ENCODE measurements at regions of chr19 and their contacts with region 1.

Region 1: DNA sequence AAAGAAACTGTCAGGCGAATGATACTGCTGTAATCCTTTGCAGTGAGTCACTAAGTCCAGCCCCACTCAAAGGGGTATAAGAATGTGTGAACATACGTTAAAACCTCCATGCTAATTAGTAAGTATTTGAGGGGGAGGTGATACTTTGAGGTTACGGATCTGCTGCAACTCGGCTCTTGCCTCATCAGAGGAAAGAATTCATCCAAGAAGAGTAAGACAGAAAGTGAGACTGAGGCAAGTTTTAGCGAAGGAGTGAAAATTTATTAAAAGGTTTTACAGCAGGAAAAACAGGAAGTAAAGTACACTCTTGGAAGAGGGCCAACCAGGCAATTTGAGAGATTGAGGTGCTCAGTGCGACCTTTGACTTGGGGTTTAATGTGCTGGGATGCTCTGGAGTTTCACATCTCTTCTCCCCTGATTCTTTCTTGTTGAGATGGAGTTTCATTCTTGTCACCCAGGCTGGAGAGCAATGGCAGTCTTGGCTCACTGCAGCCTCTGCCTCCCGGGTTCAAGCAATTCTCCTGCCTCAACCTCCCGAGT is 9.8 kb downstream of the CLEC4M start:
- DNase-seq: peak; percentile 64
- ATAC-seq: peak; percentile 97
- H3K4me3 Mint-ChIP-seq: peak overlapping the region; percentile 13
- H3K27ac Mint-ChIP-seq: peak overlapping the region; percentile 85
- H3K4me1 Mint-ChIP-seq: peaks cover 27% of the 10 kb centered on the region
- H3K27me3 Mint-ChIP-seq: peaks cover 31% of the 10 kb centered on the region

Region 2: DNA sequence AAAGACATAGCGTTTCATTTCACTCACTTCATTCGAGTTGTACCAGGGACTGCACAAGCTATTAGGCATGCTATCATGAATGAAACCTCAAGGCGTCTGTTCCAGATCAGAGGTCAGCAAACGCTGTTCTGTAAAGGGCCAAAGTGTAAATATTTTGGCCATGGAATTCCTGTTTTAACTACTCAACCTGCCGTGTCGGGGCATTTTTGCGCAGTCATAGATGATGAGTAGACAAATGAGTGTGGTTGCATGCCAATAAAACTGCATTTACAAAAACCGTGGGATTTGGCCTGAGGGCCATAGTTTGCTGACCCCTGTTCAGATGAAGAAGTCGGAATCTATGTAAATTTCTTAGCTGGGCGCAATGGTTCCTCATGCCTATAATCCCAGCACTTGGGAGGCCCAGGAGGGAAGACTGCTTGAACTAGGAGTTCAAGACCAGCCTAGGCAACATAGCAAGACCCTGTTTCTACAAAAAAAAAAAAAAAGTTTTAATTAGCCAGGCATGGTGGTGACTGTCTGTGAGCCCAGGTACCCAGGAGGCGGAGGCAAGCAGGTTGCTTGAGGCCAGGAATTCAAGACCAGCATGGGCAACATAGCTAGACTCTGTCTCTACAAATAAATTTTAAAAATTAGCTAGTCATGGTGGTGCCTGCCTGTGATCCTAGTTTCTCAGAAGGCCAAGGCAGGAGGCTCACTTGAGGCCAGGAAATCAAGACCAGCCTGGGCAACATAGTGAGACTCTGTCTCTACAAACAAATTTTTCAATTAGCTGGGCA is 484.9 kb before region 1 on chr19:
- CTCF ChIA-PET with region 1: no interaction called
- POLR2A ChIA-PET with region 1: no interaction called
- intact Hi-C with region 1: no loop called
- DNase-seq: no peak
- ATAC-seq: no peak
- H3K4me3 Mint-ChIP-seq: no peak overlapping the region
- H3K27ac Mint-ChIP-seq: no peak overlapping the region
- H3K4me1 Mint-ChIP-seq: no peaks in the 10 kb centered on the region
- H3K27me3 Mint-ChIP-seq: peaks cover 8% of the 10 kb centered on the region

Region 3: GRCh38 chr19:7699417-7700401 is 73.1 kb before region 1 on chr19:
- CTCF ChIA-PET with region 1: interaction called, 3 read pairs
- POLR2A ChIA-PET with region 1: no interaction called
- intact Hi-C with region 1: loop called in 1 of 2 experiments (anchors 2 kb)
- DNase-seq: peak; percentile 80
- ATAC-seq: peak; percentile 78
- H3K4me3 Mint-ChIP-seq: peak overlapping the region; percentile 46
- H3K27ac Mint-ChIP-seq: peak overlapping the region; percentile 39
- H3K4me1 Mint-ChIP-seq: peaks cover 23% of the 10 kb centered on the region
- H3K27me3 Mint-ChIP-seq: peaks cover 13% of the 10 kb centered on the region

Region 4: GRCh38 chr19:7734220-7735203 is 38.3 kb before region 1 on chr19:
- CTCF ChIA-PET with region 1: no interaction called
- POLR2A ChIA-PET with region 1: no interaction called
- intact Hi-C with region 1: loop called (anchors 1 to 5 kb)
- DNase-seq: no peak
- ATAC-seq: no peak
- H3K4me3 Mint-ChIP-seq: no peak overlapping the region
- H3K27ac Mint-ChIP-seq: no peak overlapping the region
- H3K4me1 Mint-ChIP-seq: peaks cover 14% of the 10 kb centered on the region
- H3K27me3 Mint-ChIP-seq: peaks cover 41% of the 10 kb centered on the region

Region 5: DNA sequence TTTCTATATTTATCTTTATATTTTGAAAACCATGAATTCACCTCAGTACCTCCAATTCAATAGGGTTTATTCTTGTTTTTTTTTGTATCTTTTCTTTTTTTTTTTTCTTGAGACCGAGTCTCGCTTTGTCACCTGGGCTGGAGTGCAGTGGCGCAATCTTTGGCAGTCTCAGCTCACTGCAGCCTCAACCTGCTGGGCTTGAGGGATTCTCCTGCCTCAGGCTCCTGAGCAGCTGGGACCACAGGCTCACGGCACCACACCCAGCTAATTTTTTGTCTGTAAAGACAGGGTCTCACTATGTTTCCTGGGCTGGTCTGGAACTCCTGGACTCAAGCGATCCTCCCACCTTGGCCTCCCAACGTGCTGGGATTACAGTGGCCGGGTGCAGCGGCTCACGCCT is 34.1 kb after region 1 on chr19:
- CTCF ChIA-PET with region 1: interaction called, 3 read pairs
- POLR2A ChIA-PET with region 1: interaction called, 4 read pairs
- intact Hi-C with region 1: loop called (anchors 1 kb)
- DNase-seq: no peak
- ATAC-seq: no peak
- H3K4me3 Mint-ChIP-seq: no peak overlapping the region
- H3K27ac Mint-ChIP-seq: no peak overlapping the region
- H3K4me1 Mint-ChIP-seq: peaks cover 11% of the 10 kb centered on the region
- H3K27me3 Mint-ChIP-seq: peaks cover 35% of the 10 kb centered on the region

Measured in activated CD4-positive, alpha-beta T cell treated with anti-CD3 and anti-CD28 coated beads for 36 hours (primary cell).